ENCODE measurements at regions of chr10 and their contacts with region 1.

Region 1: GRCh38 chr10:119634219-119634544 is 17.0 kb upstream of the BAG3 start:
- DNase-seq: no peak
- H3K4me3 ChIP-seq: no peak overlapping the region
- H3K27ac ChIP-seq: no peak overlapping the region
- H3K27me3 ChIP-seq: no peaks in the 10 kb centered on the region
- CTCF ChIP-seq: no peak

Region 2: GRCh38 chr10:119139464-119140067 is 494.6 kb before region 1 on chr10:
- CTCF ChIA-PET with region 1: no interaction called
- POLR2A ChIA-PET with region 1: no interaction called
- DNase-seq: no peak
- H3K4me3 ChIP-seq: no peak overlapping the region
- H3K27ac ChIP-seq: no peak overlapping the region
- H3K27me3 ChIP-seq: no peaks in the 10 kb centered on the region
- CTCF ChIP-seq: peak; percentile 70

Region 3: DNA sequence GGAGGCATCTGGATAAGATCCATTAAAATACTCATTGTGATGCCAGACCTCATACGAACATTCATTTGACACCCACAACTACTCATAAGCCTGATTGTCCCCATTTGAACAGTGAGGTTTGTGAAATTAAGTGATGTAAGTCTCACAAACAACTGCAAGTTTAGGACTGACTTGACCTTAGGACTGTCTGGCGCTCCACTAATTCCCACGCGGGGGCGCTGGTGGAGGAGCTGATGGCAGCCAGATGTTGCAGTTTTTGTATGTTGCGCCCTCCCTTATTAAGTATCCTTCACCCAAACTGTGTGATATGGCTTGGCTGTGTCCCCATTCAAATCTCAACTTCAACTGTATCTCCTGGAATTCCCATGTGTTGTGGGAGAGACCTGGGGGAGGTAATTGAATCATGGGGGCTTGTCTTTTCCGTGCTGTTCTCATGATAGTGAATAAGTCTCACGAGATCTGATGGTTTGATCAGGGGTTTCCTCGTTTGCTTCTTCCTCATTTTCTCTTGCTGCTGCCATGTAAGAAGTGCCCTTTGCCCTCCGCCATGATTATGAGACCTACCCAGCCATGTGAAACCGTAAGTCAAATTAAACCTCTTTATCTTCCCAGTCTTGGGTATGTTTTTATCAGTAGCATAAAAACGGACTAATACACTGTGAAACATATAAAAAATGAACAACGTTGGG is 17.2 kb before region 1 on chr10:
- CTCF ChIA-PET with region 1: no interaction called
- POLR2A ChIA-PET with region 1: no interaction called
- DNase-seq: no peak
- H3K4me3 ChIP-seq: no peak overlapping the region
- H3K27ac ChIP-seq: no peak overlapping the region
- H3K27me3 ChIP-seq: no peaks in the 10 kb centered on the region
- CTCF ChIP-seq: 0 out of 2 replicates have a peak, but pooled peaks have one; percentile 23

Region 4: GRCh38 chr10:119644205-119644814 is 10.1 kb after region 1 on chr10:
- CTCF ChIA-PET with region 1: interaction called, 11 read pairs
- POLR2A ChIA-PET with region 1: no interaction called
- DNase-seq: no peak
- H3K4me3 ChIP-seq: no peak overlapping the region
- H3K27ac ChIP-seq: no peak overlapping the region
- H3K27me3 ChIP-seq: no peaks in the 10 kb centered on the region
- CTCF ChIP-seq: peak; percentile 43